ENCODE measurements at regions of chr17 and their contacts with region 1.

Region 1: DNA sequence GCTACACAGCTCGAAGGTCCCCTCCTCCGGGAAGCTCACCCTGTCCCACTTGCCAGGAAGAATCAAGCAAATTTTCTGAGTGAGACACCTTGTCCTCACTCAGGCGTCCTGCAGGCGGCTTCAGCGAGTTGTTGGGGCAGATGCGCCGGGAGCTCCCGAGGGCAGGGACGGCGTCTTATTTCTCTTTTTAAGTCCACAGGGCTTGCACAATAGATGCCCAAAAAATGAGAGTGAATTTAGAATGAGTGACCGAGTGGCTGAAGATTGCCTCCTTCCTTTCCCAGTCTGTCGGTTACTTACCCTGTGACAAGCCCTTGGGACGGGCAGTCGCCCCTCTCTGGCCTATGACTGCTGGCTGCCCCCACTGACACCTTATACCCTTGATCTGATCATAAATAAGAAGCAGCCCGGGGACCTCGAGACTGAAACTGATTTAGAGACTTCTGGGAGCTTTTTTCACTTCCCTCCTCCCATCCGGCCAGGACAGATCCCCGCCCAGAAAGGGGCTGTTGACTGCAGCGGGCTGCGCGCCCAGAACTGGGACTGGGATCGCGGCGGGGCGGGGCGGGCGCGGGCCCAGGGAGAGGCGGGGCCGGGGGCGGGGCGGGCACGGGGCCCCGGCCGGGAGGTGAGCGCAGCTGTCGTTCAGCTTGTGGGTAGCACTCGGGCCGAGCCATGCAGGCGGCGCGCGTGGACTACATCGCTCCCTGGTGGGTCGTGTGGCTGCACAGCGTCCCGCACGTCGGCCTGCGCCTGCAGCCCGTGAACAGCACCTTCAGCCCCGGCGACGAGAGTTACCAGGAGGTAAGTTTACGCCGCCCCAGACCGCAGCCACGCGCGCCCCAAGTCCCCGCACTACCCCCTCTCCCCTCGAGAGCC is at the start of gene TTYH2:
- DNase-seq: peak; percentile 82
- H3K4me3 Mint-ChIP-seq: peak within 1 kb of the TSS; percentile 70
- H3K27ac Mint-ChIP-seq: peak within 1 kb of the TSS; percentile 56
- H3K4me1 Mint-ChIP-seq: peaks cover 8% of the 10 kb centered on the region
- H3K27me3 Mint-ChIP-seq: peaks cover 61% of the 10 kb centered on the region
- CTCF ChIP-seq: no peak
- total RNA-seq, gene TTYH2: 0.28 and 0.81 TPM in 2 replicates

Region 2: GRCh38 chr17:74280093-74280513 is 67.0 kb after region 1 on chr17:
- CTCF ChIA-PET with region 1: no interaction called
- intact Hi-C with region 1: loop called (anchors 5 kb)
- DNase-seq: no peak
- H3K4me3 Mint-ChIP-seq: no peak overlapping the region
- H3K27ac Mint-ChIP-seq: no peak overlapping the region
- H3K4me1 Mint-ChIP-seq: no peaks in the 10 kb centered on the region
- H3K27me3 Mint-ChIP-seq: peaks cover 33% of the 10 kb centered on the region
- CTCF ChIP-seq: no peak

Region 3: DNA sequence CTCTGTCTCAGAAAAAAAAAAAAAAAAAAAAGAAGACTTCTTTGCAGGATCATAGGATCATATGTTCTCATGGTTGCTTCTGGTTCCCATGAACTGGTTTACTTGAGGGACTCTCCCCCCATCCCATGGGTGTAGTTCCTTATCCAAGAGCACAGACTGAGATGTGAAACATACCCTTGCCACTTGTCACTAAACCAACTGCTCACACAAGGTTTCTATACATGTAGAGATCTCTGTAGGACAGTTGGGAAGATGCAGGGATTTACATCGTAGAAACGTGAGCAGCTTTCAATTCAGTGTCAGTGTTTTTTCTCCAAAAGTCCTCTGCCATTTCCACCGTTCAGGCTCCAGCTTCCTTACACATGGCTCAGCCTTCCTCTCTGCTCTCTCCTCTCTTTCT is 1232.1 kb after region 1 on chr17:
- CTCF ChIA-PET with region 1: interaction called, 10 read pairs
- intact Hi-C with region 1: no loop called
- DNase-seq: no peak
- H3K4me3 Mint-ChIP-seq: no peak overlapping the region
- H3K27ac Mint-ChIP-seq: no peak overlapping the region
- H3K4me1 Mint-ChIP-seq: no peaks in the 10 kb centered on the region
- H3K27me3 Mint-ChIP-seq: no peaks in the 10 kb centered on the region
- CTCF ChIP-seq: no peak